Activated CD8-positive, alpha-beta T cell treated with anti-CD3 and anti-CD28 coated beads for 36 hours (primary cell): ENCODE measurements at regions of chr7 and their contacts with region 1.

Region 1: DNA sequence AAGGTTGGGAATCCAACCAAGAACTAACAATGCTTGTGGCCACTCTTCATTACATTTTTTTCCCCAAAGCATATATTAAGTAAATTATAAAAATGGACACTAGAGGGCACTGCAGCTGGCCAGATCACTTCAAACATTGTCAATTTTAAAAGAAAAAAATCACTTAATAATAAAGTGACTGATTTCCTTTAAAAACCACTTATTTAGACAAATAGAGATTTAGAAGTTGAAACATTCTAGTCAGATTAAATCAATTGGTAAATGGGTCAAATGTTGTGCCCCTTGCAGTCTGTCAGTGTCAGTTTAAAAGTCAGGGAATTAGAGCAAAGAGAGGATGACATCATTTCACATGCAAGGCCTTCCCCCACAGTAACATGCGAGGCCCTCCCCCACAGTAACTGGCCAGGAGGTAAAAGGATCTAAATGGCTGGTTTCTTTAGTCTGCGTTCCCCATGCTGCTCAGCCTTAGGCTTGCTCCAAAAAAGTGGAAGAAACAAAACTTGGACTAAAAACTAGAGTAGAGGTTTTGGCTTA is 177.9 kb downstream of the SKAP2 start:
- DNase-seq: peak; percentile 4
- ATAC-seq: peak; percentile 30
- H3K4me3 Mint-ChIP-seq: no peak overlapping the region
- H3K27ac Mint-ChIP-seq: no peak overlapping the region
- H3K4me1 Mint-ChIP-seq: no peaks in the 10 kb centered on the region
- H3K27me3 Mint-ChIP-seq: peaks cover 12% of the 10 kb centered on the region
- CTCF ChIP-seq: peak; percentile 74

Region 2: DNA sequence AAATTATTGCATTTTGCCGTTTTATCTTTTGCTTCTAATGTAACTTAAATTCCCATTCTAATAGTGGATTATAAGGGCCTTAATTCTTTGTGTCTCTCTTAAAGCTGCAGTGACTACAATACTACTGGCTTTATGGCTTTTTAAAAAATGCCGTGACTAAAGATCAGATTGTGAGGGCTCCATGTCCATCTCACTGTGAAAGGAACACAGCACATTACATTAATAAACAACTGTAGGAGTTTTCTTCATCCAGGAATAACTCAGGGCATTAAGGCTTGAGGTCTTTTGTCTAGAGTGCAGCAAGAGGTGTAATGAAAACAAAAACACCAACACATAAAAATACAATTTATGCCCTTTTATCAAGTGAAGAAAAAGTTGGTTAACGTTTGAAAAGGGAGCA is 27.4 kb before region 1 on chr7:
- CTCF ChIA-PET with region 1: interaction called, 23 read pairs
- POLR2A ChIA-PET with region 1: no interaction called
- intact Hi-C with region 1: no loop called
- DNase-seq: no peak
- ATAC-seq: no peak
- H3K4me3 Mint-ChIP-seq: no peak overlapping the region
- H3K27ac Mint-ChIP-seq: no peak overlapping the region
- H3K4me1 Mint-ChIP-seq: no peaks in the 10 kb centered on the region
- H3K27me3 Mint-ChIP-seq: peaks cover 2% of the 10 kb centered on the region
- CTCF ChIP-seq: no peak

Region 3: DNA sequence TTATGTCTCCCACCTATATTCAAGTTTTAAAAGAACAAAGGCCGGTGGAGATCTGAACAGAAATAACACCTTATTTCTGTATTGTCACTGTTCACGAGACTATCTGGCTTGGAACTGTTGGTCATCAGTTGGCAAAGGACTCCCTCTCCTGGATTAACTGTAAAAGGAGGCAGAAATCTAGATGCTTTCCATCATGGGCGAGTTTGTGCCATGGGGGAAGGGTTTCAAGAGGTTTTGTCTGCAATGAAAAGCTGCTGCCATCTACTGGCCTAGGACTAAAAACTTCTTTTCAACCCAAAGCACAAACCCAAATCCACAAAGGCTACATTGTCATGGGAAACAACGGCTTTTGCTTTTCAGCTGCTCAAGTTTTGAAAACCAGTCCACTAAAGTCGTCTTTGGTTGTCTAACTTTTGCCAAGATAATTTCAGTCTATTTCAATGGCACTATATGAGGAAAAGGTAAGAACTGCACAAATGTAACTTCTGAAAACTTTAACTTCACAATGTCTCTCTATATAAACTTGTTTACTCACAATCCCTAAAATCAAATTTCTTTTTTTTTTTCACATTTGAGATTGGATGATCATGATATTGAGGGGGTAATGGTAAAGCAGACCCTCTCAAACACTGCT is 18.9 kb before region 1 on chr7:
- CTCF ChIA-PET with region 1: interaction called, 23 read pairs
- POLR2A ChIA-PET with region 1: no interaction called
- intact Hi-C with region 1: no loop called
- DNase-seq: peak; percentile 63
- ATAC-seq: peak; percentile 82
- H3K4me3 Mint-ChIP-seq: no peak overlapping the region
- H3K27ac Mint-ChIP-seq: no peak overlapping the region
- H3K4me1 Mint-ChIP-seq: peaks cover 16% of the 10 kb centered on the region
- H3K27me3 Mint-ChIP-seq: peaks cover 3% of the 10 kb centered on the region
- CTCF ChIP-seq: peak; percentile 72

Region 4: GRCh38 chr7:27150568-27151340 is 464.2 kb after region 1 on chr7:
- CTCF ChIA-PET with region 1: interaction called, 10 read pairs
- POLR2A ChIA-PET with region 1: no interaction called
- intact Hi-C with region 1: no loop called
- DNase-seq: peak; percentile 75
- ATAC-seq: peak; percentile 87
- H3K4me3 Mint-ChIP-seq: peak overlapping the region; percentile 59
- H3K27ac Mint-ChIP-seq: no peak overlapping the region
- H3K4me1 Mint-ChIP-seq: peaks cover 33% of the 10 kb centered on the region
- H3K27me3 Mint-ChIP-seq: peaks cover 88% of the 10 kb centered on the region
- CTCF ChIP-seq: peak; percentile 93

Region 5: DNA sequence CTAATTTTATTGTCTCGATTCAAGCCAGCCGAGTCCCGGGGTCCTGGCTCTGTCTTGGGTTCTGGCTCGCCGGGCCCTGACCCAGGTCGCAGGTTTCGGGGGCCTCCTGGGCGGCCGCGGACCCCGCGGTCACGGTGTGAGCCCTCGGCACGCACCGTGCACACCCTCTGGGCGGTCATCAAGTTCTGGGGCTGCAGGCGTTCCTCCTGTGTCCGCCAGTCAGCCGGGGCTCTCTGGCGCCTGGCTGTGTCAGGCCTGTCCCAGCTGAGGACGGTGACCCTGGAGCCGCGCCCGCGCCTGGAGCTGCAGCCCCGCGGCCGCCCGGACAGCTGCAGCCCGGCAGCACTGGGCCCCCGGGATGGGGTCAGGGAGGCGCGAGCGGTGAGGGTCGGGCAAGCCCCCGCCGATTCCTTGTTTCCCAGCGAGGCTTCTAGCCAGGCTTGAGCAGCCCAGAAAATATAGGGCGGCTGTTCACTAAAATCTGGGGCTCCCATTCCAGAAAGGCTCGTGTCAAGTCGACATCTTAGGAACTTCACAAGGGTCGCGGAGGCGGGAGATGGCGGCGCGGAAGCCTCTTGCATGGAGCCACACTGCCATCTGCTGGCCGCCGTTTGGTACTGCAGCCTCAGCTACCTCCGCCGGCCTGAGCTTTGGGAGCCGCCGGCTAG is 474.2 kb after region 1 on chr7:
- CTCF ChIA-PET with region 1: interaction called, 23 read pairs
- POLR2A ChIA-PET with region 1: no interaction called
- intact Hi-C with region 1: loop called (anchors 2 kb)
- DNase-seq: peak; percentile 89
- ATAC-seq: peak; percentile 78
- H3K4me3 Mint-ChIP-seq: peak overlapping the region; percentile 59
- H3K27ac Mint-ChIP-seq: no peak overlapping the region
- H3K4me1 Mint-ChIP-seq: peaks cover 27% of the 10 kb centered on the region
- H3K27me3 Mint-ChIP-seq: peaks cover 79% of the 10 kb centered on the region
- CTCF ChIP-seq: peak; percentile 98

Region 6: DNA sequence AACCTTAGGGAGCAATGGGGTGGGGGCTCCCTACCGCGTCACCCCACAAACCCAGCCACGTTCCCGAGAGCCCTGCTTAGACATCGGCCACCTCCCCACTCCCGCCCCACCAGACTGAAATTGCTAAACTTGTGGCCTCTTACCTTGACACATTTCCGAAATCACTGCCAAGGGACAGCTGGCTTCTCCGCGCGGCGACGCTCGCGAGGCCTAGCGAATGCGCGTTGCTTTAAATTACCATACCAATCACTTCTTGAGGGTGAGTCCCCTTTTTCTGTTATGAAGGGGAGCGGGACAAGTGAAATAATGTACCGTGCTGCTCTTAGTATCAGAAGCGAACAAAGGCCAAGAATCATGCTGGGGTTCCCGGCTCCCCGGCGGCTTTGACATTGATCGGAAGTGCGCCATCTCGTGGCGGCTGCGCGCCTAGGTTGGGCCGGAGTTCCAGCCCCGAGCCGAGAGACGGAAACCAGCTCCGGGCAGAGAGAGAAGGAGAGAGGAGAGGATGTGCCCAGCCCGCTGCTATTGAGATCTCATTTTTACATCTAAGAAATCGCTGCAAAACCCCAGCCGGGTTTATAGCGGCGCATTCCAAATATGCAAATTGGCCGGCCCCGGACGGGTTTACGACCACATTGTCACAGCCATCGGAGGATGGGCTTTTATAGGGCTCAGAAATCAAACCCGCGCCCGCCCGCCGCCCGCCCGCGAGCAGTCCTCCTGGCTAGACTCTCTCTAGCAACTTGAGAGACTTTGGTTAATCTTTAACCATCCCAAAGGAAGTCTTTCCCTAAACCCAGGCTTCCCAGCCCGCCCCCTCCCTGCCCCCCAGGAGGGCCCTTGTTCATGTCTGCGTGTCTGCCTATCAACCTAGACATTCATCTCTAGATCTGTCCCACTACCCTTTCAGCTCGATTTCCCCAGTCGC is 493.3 kb after region 1 on chr7:
- CTCF ChIA-PET with region 1: interaction called, 16 read pairs
- POLR2A ChIA-PET with region 1: no interaction called
- intact Hi-C with region 1: no loop called
- DNase-seq: peak; percentile 73
- ATAC-seq: peak; percentile 78
- H3K4me3 Mint-ChIP-seq: no peak overlapping the region
- H3K27ac Mint-ChIP-seq: no peak overlapping the region
- H3K4me1 Mint-ChIP-seq: peaks cover 5% of the 10 kb centered on the region
- H3K27me3 Mint-ChIP-seq: peaks cover 68% of the 10 kb centered on the region
- CTCF ChIP-seq: peak; percentile 84